ENCODE measurements at regions of chr6 and their contacts with region 1.

Region 1: DNA sequence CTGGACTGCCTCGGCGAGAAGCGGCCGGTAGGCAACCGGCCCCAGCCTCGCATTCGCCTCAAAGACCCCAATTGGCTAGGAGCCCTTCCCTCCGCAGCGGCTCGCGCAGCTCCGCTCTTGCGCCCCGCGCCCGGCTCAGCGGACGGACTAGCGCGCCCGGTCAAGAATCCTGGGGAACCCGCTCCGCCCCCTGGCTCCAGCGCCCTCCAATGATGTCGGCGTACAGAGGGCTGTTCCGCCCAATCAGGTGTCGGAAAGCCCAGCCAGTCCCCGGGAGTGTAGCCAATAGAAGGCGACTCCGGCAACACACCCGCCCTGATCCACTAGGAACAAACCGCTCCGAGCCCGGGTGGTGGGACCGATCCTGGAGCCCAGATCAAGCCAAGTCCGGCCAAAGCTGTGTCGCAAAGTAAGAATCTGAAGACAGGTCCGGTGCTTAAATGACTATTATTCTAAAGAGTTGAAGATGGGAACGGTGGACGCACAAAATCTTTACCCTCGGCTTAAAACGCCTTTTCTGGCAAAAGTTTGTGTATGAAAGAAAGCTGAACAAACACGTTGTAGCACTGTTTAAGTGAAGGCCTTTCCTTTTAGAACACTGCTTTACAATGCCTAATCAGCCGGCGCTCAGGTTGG is 132.2 kb downstream of the OGFRL1 start:
- DNase-seq: peak; percentile 96 to 98
- H3K4me3 ChIP-seq: peak overlapping the region; percentile 75 to 92
- H3K27ac ChIP-seq: peak overlapping the region; percentile 94 to 97
- H3K4me1 ChIP-seq: peaks cover 0 to 32% (median 10%) of the 10 kb centered on the region in 4 donors
- H3K27me3 ChIP-seq: no peaks in the 10 kb centered on the region
- CTCF ChIP-seq: no peak

Region 2: DNA sequence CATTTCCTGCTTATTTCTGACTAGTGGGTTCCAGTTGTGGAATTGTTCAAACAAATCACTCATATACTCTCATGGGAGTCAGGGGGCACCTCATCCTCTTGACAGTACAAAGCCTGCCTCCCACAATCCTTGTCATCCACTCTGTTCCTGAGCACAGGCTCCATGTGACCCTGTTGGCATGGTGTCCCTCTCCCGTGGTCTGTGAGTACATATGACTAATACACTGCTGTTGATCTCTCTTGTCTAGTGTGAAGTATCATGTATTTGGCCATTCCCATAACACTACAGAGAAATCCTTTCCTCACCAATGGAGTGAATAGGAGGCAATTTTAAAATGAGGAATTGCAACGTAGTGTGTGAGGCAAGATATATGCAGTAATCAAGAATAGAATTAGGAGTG is 53.1 kb after region 1 on chr6:
- intact Hi-C with region 1: loop called (anchors 5 kb)
- DNase-seq: peak; percentile 88 to 89
- H3K4me3 ChIP-seq: no peak overlapping the region
- H3K27ac ChIP-seq: peak overlapping the region in 1 of 2 donors; percentile 14
- H3K4me1 ChIP-seq: peaks cover 0 to 33% (median 12%) of the 10 kb centered on the region in 4 donors
- H3K27me3 ChIP-seq: no peaks in the 10 kb centered on the region
- CTCF ChIP-seq: no peak

Region 3: DNA sequence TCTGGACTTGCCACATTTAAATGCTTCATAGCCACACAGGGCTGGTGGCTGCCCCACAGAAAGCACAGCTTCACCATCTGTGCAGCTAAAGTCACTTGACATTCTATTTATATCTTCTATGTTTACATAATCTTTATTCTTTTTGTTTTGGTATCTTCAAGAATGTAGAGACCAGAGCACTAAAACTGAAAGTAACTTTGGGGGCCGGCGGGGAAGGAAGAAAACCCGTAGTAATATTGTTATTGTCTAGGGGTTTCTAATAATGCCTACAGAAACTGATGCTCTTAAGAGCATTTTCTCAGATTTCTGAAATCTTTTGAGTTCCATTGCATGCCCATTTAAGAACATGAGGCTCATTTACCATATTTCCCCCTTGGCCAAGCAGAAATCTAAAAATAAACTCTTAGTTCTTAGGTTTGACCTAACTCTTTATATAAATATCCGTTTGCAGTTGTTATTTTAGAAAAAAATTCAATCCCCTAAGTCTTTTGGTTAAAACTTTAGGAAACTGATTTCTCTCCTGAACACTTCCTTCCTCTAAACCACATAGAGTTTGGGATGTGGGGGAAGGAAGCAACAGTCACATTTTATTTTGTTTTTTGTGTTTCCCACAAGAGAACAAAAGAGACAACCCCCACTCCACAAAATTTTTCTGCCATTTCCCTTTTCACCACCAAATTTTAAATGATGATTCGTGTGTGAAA is 75.4 kb after region 1 on chr6:
- intact Hi-C with region 1: loop called (anchors 5 kb)
- DNase-seq: no peak
- H3K4me3 ChIP-seq: peak overlapping the region; percentile 43 to 50
- H3K27ac ChIP-seq: peak overlapping the region; percentile 75 to 80
- H3K4me1 ChIP-seq: peaks cover 0 to 51% (median 15%) of the 10 kb centered on the region in 4 donors
- H3K27me3 ChIP-seq: no peaks in the 10 kb centered on the region
- CTCF ChIP-seq: no peak